H1 (cell line): ENCODE measurements at regions of chr22 and their contacts with region 1.

Region 1: GRCh38 chr22:38201710-38202436 is at the start of gene MAFF:
- DNase-seq: peak; percentile 77 to 93
- H3K4me3 ChIP-seq: peak within 1 kb of the TSS; percentile 64 to 82 (median 71)
- H3K27ac ChIP-seq: peak within 1 kb of the TSS; percentile 75; the same call in 1 of the 2 replicates
- H3K4me1 ChIP-seq: peaks cover 0 to 10% (median 6%) of the 10 kb centered on the region in 4 experiments; a peak in 6 of 7 replicates
- H3K27me3 ChIP-seq: peaks cover 0 to 14% (median 11%) of the 10 kb centered on the region in 4 experiments; a peak in 5 of 7 replicates
- CTCF ChIP-seq: no peak
- EP300 ChIP-seq: no peak
- POLR2A ChIP-seq: peak in 1 of 2 experiments; percentile 78; a peak in 2 of 3 replicates
- RAD21 ChIP-seq: no peak
- total RNA-seq, gene MAFF: 6.2 and 6.3 TPM in 2 replicates

Region 2: DNA sequence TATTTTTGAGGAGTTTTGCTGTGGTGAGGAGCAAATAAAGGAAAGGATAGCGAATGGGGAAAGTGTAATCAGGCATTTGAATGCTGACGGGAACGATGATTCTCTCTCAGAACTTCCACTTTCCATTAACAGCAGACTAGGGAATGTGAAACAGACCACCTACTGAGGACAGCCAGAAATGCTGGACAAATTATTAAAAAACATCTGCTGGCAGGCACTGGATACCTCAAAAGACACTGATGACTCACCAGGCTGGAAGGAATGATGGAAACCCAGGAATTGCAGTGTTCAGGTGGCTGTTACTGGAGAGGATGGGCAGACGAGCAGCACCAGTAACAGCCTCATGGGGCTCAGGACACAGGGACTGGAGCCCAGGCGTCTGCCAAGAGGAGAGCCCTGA is 53.6 kb before region 1 on chr22:
- CTCF ChIA-PET with region 1: no interaction called
- POLR2A ChIA-PET with region 1: no interaction called
- DNase-seq: no peak
- H3K4me3 ChIP-seq: no peak overlapping the region
- H3K27ac ChIP-seq: no peak overlapping the region
- H3K4me1 ChIP-seq: peaks cover 0 to 3% (median 0%) of the 10 kb centered on the region in 4 experiments; a peak in 3 of 7 replicates
- H3K27me3 ChIP-seq: no peaks in the 10 kb centered on the region
- CTCF ChIP-seq: no peak
- EP300 ChIP-seq: no peak
- POLR2A ChIP-seq: no peak
- RAD21 ChIP-seq: no peak

Region 3: GRCh38 chr22:38181453-38182247 is 20.2 kb before region 1 on chr22 and contains the start of gene PLA2G6:
- CTCF ChIA-PET with region 1: interaction called, 5 read pairs
- POLR2A ChIA-PET with region 1: interaction called, 12 read pairs
- DNase-seq: peak; percentile 98
- H3K4me3 ChIP-seq: peak within 1 kb of the TSS; percentile 60 to 81 (median 70)
- H3K27ac ChIP-seq: peak within 1 kb of the TSS; percentile 97
- H3K4me1 ChIP-seq: peaks cover 0 to 15% (median 8%) of the 10 kb centered on the region in 4 experiments; a peak in 6 of 7 replicates
- H3K27me3 ChIP-seq: no peaks in the 10 kb centered on the region
- CTCF ChIP-seq: no peak
- EP300 ChIP-seq: no peak
- POLR2A ChIP-seq: peak in 1 of 2 experiments; percentile 81; a peak in 2 of 3 replicates
- RAD21 ChIP-seq: no peak
- total RNA-seq, gene PLA2G6: 13.2 and 14.2 TPM in 2 replicates